B cell (primary cell): ENCODE measurements at regions of chr14 and their contacts with region 1.

Region 1: DNA sequence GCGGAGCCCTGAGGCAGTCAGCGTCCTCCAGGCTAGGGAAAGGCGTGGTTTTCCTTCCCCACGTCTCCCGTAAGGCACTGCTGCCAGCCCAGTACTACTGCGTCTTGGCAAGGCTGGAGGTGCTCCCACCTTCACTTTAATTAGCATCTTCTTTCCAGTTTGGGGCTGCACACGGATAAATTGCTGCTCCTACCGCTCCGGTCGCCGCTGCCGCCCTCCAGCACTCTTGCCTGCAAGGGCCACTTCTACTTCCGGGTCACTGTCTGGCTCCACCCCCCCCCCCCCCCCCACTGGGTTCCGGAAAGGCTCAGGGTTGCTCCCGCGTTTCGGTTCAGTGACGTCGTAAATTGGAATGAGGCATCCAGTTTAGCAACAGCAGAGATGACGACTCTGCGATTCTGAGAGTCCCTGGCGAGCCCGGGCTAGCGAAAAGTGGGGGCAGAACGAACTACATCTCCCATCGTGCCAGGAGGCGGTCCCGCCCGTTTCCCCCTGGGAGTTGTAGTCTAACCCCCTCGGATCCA is at the start of gene NEDD8:
- DNase-seq: peak; percentile 95
- ATAC-seq: peak; percentile 86
- H3K4me3 ChIP-seq: peak within 1 kb of the TSS; percentile 75 to 100 (median 97)
- H3K4me3 Mint-ChIP-seq: peak within 1 kb of the TSS; percentile 96
- H3K27ac ChIP-seq: peak within 1 kb of the TSS; percentile 36 to 67
- H3K27ac Mint-ChIP-seq: peak within 1 kb of the TSS; percentile 95
- H3K4me1 ChIP-seq: peaks cover 18 to 24% of the 10 kb centered on the region in 2 donors
- H3K4me1 Mint-ChIP-seq: peaks cover 55% of the 10 kb centered on the region
- H3K27me3 ChIP-seq: no peaks in the 10 kb centered on the region
- H3K27me3 Mint-ChIP-seq: no peaks in the 10 kb centered on the region
- CTCF ChIP-seq: no peak
- total RNA-seq, gene NEDD8: 86.6 and 98.5 TPM in 2 replicates

Region 2: DNA sequence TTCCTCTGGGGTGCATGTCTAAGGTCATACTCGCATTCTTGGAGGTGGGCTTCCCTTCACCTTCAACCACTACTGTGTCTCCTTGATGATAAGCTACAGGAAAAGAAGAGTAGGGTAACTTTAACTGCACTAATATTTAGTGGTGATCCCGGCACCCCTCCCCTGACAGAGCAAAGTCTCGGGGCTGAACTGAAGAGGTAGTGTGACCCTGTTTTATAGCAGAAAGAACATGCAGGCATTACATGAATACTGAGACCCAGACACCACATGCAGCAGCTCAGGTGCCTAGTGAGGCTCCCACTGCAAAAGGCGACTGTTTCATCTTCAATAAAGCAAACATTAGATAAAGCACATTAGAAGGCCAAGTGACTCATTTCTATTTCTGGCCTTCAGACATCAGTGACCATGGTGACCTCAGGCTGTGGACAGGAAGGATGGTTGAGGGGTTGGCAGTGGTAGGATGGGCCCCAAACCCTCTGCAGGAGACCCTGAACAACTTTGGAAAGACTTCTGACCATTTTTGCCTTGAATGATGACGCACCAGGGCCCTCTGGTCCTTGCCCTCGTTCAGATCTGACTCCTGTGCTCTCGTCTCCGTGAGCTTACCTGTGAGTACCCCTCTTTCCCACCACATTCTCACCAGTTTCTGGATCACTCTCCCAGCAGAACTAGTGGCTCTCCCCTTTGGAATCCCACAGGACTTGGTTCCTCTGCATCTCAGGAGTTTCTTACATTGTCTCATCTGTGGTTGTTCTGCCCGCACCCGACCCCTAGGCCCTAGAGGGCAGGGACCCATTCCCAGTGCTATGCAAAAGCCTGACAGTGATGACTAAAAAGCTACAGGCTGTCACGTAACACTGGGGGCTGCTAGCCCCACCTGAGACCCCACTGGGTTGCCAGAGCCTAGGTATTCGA is 629.7 kb before region 1 on chr14:
- CTCF ChIA-PET with region 1: no interaction called
- POLR2A ChIA-PET with region 1: no interaction called
- intact Hi-C with region 1: no loop called
- DNase-seq: no peak
- ATAC-seq: no peak
- H3K4me3 ChIP-seq: no peak overlapping the region
- H3K4me3 Mint-ChIP-seq: no peak overlapping the region
- H3K27ac ChIP-seq: no peak overlapping the region
- H3K27ac Mint-ChIP-seq: no peak overlapping the region
- H3K4me1 ChIP-seq: no peaks in the 10 kb centered on the region
- H3K4me1 Mint-ChIP-seq: no peaks in the 10 kb centered on the region
- H3K27me3 ChIP-seq: peaks cover 0 to 5% (median 0%) of the 10 kb centered on the region in 4 experiments
- H3K27me3 Mint-ChIP-seq: peaks cover 10% of the 10 kb centered on the region
- CTCF ChIP-seq: no peak

Region 3: DNA sequence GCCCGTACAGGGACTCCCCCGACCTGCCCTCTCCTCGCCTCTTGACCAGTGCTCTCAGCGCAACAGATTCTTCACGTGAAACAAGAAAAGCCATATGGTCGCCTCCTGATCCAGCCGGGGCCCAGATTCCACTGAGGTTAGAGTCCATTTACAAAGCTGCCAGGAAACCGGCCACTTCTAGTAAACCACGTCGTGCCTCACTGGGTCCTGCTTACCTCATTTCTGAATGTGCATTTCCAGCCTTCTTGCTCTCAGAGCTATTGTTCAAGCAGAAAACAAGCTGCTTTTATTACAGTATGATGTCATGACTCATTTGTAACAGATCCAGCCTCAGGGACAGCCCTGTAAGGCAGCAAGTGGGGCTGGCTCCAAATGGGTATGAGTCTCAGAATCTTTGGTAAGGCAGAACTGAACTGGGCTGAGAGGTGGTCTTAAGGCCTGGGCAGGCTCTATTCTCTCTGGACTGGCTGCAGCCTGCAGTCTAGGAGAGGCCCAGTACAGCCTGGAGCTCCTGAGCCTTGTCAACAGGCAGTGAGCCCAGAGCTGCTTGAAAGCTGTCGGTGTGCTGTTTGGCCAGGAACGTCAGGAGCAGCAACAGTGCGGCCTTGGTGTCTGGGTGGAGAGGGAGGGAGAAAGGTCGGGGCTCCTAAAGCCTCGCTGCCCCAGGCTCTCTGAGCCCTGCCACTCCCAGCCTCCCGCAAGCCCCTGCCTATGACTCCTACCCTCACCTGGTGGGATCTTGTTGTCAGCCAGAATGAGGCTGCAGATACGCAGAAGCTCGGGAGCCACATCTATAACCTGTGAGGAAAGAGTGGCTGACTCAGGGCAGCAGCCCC is 52.0 kb before region 1 on chr14:
- CTCF ChIA-PET with region 1: no interaction called
- POLR2A ChIA-PET with region 1: interaction called, 11 read pairs
- intact Hi-C with region 1: no loop called
- DNase-seq: no peak
- ATAC-seq: no peak
- H3K4me3 ChIP-seq: no peak overlapping the region
- H3K4me3 Mint-ChIP-seq: no peak overlapping the region
- H3K27ac ChIP-seq: no peak overlapping the region
- H3K27ac Mint-ChIP-seq: peak overlapping the region; percentile 38
- H3K4me1 ChIP-seq: no peaks in the 10 kb centered on the region
- H3K4me1 Mint-ChIP-seq: peaks cover 8% of the 10 kb centered on the region
- H3K27me3 ChIP-seq: no peaks in the 10 kb centered on the region
- H3K27me3 Mint-ChIP-seq: no peaks in the 10 kb centered on the region
- CTCF ChIP-seq: no peak

Region 4: DNA sequence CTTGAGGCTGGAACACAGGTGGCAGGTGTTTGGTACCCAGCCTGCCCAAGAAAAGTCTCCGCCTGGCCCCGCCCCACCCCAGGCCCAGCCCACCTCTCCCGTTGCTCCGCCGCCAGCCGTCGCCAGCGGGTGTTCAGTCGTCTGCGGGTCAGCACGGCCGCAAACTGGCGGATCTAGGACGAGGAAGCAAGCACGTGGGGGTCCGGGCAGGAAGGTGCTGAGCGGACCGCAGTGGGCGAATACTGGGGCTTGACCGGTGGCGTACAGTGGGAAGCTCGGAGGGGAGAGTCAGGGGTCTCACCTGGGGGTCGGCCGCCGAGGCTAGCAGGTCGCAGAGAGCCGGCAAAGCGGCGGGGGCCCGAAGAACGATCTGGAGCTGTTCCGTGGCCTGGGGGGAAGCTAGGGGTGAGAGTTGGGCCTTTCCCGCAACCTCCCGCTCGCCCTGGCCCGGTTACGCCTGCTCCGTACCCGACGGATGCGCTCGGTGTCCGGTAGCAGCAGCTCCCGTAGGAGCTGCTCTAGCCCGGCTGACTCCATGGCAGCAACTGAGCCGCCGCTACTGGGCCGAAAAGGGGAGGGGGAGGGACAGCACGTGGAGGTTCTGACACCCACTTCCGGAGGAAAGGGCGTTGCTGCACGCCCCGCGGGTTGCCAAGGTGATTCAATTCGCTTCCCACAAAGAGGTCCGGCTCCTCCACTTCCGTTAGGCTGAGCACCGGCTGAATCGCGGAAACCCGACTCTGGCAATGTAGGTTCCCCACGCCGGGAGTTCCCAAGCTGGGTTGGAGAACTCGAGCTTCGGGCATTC is 43.7 kb before region 1 on chr14 and contains the start of gene IPO4:
- CTCF ChIA-PET with region 1: no interaction called
- POLR2A ChIA-PET with region 1: no interaction called
- intact Hi-C with region 1: loop called (anchors 1 kb)
- DNase-seq: peak; percentile 96
- ATAC-seq: peak; percentile 93
- H3K4me3 ChIP-seq: peak within 1 kb of the TSS; percentile 32 to 79 (median 70)
- H3K4me3 Mint-ChIP-seq: peak within 1 kb of the TSS; percentile 93
- H3K27ac ChIP-seq: peak within 1 kb of the TSS; percentile 63 to 86
- H3K27ac Mint-ChIP-seq: peak within 1 kb of the TSS; percentile 87
- H3K4me1 ChIP-seq: peaks cover 14 to 17% of the 10 kb centered on the region in 2 donors
- H3K4me1 Mint-ChIP-seq: peaks cover 35% of the 10 kb centered on the region
- H3K27me3 ChIP-seq: no peaks in the 10 kb centered on the region
- H3K27me3 Mint-ChIP-seq: no peaks in the 10 kb centered on the region
- CTCF ChIP-seq: no peak
- total RNA-seq, gene IPO4: 29.8 and 35.0 TPM in 2 replicates

Region 5: DNA sequence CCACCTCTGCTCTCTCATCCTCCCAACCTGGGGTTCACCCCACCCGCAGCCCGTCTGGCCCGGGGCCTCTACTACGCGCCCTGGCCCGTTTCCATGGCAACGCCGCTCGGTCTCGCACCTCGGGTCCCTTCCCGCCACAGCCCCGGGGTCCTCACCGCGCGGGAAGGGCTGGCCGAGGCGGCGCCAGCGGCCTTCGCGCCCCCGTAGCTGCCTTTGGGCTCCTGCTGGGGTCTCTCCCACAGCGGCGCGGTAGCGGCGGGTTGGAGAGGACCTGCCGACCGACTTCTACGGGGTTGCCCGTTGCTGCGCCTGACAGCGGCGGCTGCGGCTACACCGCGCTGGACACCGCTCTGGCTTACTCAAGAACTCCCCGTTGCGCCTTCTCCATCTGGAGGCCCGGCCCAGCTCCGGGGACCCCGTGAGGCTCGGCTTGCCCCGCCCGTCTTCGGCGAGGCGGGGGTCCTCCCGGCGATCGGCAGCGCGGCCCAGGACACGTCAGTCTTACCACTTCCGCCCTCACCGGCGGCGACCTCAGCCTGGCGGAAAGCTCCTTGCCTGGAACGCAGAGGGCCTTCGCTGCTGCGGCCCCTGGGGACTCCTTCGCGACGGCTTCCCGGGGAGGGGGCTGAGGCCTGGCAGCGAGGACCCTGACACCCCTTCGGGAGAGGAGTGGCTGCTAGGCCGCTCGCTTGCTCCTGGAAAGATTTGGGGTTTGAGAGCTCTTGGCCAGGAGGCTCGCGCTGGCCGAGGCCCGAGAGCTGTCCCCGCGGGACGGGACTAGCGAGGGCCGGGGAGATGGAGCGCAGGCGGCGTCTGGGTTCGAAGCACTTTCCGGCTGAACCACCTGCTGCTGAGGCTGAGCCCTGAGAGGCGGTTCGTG is 36.8 kb before region 1 on chr14 and contains the start of gene TM9SF1:
- CTCF ChIA-PET with region 1: no interaction called
- POLR2A ChIA-PET with region 1: interaction called, 5 read pairs
- intact Hi-C with region 1: loop called (anchors 1 kb)
- DNase-seq: peak; percentile 96
- ATAC-seq: peak; percentile 90
- H3K4me3 ChIP-seq: peak within 1 kb of the TSS; percentile 82 to 99 (median 83)
- H3K4me3 Mint-ChIP-seq: peak within 1 kb of the TSS; percentile 89
- H3K27ac ChIP-seq: peak within 1 kb of the TSS; percentile 98 to 99
- H3K27ac Mint-ChIP-seq: peak within 1 kb of the TSS; percentile 99
- H3K4me1 ChIP-seq: peaks cover 25 to 26% of the 10 kb centered on the region in 2 donors
- H3K4me1 Mint-ChIP-seq: peaks cover 49% of the 10 kb centered on the region
- H3K27me3 ChIP-seq: no peaks in the 10 kb centered on the region
- H3K27me3 Mint-ChIP-seq: no peaks in the 10 kb centered on the region
- CTCF ChIP-seq: no peak
- total RNA-seq, gene TM9SF1: 24.5 and 33.9 TPM in 2 replicates

Region 6: DNA sequence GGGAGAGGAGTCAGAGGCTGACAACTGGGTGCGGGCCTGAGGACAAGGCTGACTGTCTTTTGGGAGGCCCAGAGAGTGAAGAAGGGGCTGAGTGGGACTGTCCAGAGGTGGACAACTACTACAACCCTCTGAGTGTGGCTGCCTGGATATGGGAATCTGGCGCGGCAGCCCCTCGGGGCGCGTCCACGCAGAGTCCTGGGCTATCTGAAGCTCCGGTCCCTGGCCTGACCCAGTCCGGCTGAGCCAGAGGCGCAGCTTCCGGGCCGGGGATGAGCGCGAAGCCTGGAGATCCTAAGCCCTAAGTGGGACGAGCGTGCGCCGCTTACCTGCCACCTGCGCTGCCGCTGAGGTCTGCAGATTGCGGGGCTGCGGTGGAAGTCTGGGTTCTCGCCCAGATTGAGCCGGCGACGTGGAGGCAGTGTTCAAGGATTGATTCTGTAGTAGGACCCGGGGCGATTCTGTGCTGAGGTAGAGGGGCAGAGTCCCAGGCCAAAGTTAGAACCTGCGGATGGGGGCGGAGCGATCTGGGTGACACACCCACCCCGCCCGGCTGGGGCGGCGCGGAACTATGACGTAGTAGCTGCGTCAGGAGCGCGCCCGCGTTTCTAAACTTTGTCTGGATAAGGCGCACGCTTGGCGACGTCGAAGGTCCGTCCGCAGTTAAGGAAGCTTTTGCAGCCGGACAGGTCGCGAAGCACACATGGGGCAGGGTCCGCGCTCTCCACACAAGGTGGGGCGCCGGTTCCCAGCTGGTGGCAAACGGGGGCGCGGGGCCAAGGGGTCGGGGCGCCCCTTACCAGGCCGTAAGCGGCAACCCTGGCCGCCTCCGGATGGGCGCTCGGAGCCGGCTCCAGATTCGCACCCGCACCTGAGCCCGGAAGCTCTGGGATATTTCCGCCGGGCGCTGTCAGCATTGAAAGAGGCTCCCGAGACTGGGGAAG is 67.3 kb after region 1 on chr14 and contains the starts of genes DHRS1 and NOP9:
- CTCF ChIA-PET with region 1: interaction called, 10 read pairs
- POLR2A ChIA-PET with region 1: no interaction called
- intact Hi-C with region 1: loop called (anchors 1 kb)
- DNase-seq: peak; percentile 95
- ATAC-seq: peak; percentile 86
- H3K4me3 ChIP-seq: peak within 1 kb of the TSS; percentile 58 to 93 (median 77)
- H3K4me3 Mint-ChIP-seq: peak within 1 kb of the TSS; percentile 96
- H3K27ac ChIP-seq: peak within 1 kb of the TSS; percentile 79 to 83
- H3K27ac Mint-ChIP-seq: peak within 1 kb of the TSS; percentile 98
- H3K4me1 ChIP-seq: peaks cover 30 to 41% of the 10 kb centered on the region in 2 donors
- H3K4me1 Mint-ChIP-seq: peaks cover 48% of the 10 kb centered on the region
- H3K27me3 ChIP-seq: no peaks in the 10 kb centered on the region
- H3K27me3 Mint-ChIP-seq: no peaks in the 10 kb centered on the region
- CTCF ChIP-seq: no peak
- total RNA-seq, gene DHRS1: 42.7 and 43.7 TPM in 2 replicates
- total RNA-seq, gene NOP9: 22.6 and 24.5 TPM in 2 replicates

Region 7: DNA sequence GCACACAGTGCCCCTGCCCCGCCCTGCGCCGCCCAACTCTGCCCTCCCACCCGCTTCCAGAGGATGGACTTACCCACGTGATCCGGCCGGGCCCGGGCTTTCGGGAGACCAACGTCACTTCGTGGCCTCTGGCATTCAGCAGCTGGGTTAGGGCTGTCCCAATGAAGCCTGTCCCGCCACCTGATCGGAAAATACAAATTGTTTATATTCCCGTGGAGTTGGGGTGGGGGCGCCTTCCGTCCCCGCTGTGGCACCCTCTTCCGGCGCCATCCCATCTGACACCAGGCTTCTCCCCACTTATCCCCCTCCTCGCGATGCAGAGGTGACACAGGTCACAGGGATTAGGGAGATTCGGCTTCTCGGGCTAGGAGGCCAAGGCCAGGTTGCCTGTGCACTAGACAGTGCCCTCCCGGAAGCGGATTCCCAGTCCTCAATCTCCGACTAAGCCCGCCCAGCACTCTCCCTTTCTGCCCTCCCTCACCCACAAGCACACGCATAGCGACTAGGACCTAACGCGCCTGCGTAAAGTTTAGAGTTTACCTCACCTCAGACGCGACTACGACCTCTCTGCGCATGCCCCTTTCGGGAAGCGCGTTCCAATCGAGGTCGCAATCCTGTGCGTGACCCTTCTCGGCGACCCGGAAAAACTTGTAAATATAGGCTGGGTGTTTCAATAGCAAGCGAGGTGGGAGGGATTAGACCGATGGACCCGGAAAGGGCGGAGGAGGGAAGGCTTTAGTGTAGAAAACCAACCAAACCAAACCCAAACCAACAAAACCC is 210.3 kb after region 1 on chr14 and contains the start of gene SDR39U1:
- CTCF ChIA-PET with region 1: no interaction called
- POLR2A ChIA-PET with region 1: no interaction called
- intact Hi-C with region 1: loop called (anchors 1 kb)
- DNase-seq: peak; percentile 99
- ATAC-seq: peak; percentile 89
- H3K4me3 ChIP-seq: peak within 1 kb of the TSS; percentile 86 to 98 (median 94)
- H3K4me3 Mint-ChIP-seq: peak within 1 kb of the TSS; percentile 97
- H3K27ac ChIP-seq: peak within 1 kb of the TSS; percentile 96
- H3K27ac Mint-ChIP-seq: peak within 1 kb of the TSS; percentile 98
- H3K4me1 ChIP-seq: peaks cover 20 to 29% of the 10 kb centered on the region in 2 donors
- H3K4me1 Mint-ChIP-seq: peaks cover 48% of the 10 kb centered on the region
- H3K27me3 ChIP-seq: no peaks in the 10 kb centered on the region
- H3K27me3 Mint-ChIP-seq: no peaks in the 10 kb centered on the region
- CTCF ChIP-seq: no peak
- total RNA-seq, gene SDR39U1: 107 and 126 TPM in 2 replicates